ENCODE measurements at regions of chr4 and their contacts with region 1.

Region 1: DNA sequence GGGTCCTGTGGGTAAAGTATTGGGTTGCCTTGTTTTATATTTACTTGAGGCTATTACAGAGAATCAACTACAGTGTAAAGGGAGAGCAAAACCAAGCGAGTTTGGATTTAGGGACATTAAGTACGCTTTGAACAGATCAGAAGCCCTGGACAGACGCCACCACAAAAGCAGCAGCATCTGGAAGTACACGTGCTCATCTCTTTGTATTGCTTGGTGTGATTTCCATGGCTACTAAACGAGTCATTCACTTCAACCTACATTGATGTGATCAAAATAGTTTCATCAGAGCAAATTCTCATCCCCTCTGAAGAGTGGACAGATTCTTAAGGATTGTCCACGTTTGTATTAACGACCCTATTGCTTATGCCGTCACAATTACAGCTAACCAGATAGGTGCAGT is 85.1 kb downstream of the SORBS2 start:
- DNase-seq: no peak
- H3K4me3 ChIP-seq: no peak overlapping the region
- H3K27ac ChIP-seq: no peak overlapping the region
- H3K4me1 ChIP-seq: peaks cover 32% of the 10 kb centered on the region
- H3K27me3 ChIP-seq: no peaks in the 10 kb centered on the region
- CTCF ChIP-seq: no peak
- POLR2A ChIP-seq: no peak

Region 2: DNA sequence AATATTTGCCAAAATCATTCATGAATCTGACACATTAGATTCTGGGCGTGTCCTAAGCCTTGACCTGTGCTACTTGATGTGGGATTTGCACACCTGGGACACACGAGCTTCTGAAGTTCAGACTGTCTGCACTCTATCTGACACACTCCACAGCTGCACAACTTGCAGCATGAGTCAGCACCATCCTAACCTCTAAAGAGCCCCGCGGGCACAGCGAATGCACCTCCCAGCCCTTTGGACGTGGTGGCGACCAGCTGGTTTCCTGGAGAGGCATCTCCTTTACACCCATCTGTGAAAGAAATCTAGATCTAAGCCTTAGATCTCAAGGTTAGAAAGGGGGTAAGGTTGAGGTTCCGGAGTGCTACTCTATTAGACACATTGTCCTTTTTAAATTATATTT is 15.8 kb after region 1 on chr4:
- CTCF ChIA-PET with region 1: no interaction called
- POLR2A ChIA-PET with region 1: no interaction called
- dilution Hi-C with region 1: no loop called
- intact Hi-C with region 1: loop called (anchors 1 kb)
- DNase-seq: no peak
- H3K4me3 ChIP-seq: no peak overlapping the region
- H3K27ac ChIP-seq: no peak overlapping the region
- H3K4me1 ChIP-seq: peaks cover 16% of the 10 kb centered on the region
- H3K27me3 ChIP-seq: no peaks in the 10 kb centered on the region
- CTCF ChIP-seq: no peak
- POLR2A ChIP-seq: no peak

Region 3: DNA sequence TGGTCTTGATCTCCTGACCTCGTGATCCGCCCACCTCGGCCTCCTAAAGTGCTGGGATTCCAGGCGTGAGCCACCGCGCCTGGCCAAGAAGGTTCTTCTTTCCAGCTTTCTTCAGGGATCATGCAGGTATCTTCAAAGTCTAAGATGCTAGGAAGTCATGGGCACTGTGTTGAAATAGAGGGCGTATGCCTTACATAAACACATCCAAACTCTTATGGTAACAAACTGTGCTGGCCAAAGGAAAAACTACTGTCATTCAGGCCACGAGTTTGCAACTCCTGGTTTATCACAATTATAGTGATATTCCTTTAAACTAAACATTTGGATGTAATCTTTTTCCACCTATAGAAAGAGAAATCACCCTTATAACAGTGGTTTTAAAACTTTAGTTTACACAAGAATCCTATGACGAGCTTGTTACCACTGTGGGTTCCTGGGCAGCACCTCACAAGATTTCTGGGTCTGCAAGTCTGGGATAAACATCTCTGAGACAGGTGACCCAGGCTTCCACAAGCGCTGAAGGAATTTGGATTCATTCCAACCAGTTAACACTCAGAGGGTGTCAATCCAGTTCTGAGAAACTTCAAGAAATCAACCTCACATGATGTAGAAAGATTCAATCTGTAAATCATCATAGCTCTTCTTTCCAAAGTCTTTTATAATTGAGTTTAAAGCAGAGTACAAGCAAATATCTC is 202.0 kb after region 1 on chr4:
- CTCF ChIA-PET with region 1: no interaction called
- POLR2A ChIA-PET with region 1: no interaction called
- dilution Hi-C with region 1: no loop called
- intact Hi-C with region 1: no loop called
- DNase-seq: no peak
- H3K4me3 ChIP-seq: no peak overlapping the region
- H3K27ac ChIP-seq: no peak overlapping the region
- H3K4me1 ChIP-seq: no peaks in the 10 kb centered on the region
- H3K27me3 ChIP-seq: no peaks in the 10 kb centered on the region
- CTCF ChIP-seq: no peak
- POLR2A ChIP-seq: no peak

Measured in endothelial cell of umbilical vein (primary cell).